ENCODE measurements at regions of chr5 and their contacts with region 1.

Region 1: GRCh38 chr5:172770675-172771438 is at the start of gene DUSP1:
- DNase-seq: peak; percentile 99
- ATAC-seq: peak; percentile 54
- H3K4me3 ChIP-seq: peak within 1 kb of the TSS; percentile 84 to 99 (median 99)
- H3K4me3 Mint-ChIP-seq: peak within 1 kb of the TSS; percentile 92
- H3K27ac ChIP-seq: peak within 1 kb of the TSS; percentile 100
- H3K27ac Mint-ChIP-seq: peak within 1 kb of the TSS; percentile 96
- H3K4me1 ChIP-seq: peaks cover 32 to 46% of the 10 kb centered on the region in 2 donors
- H3K4me1 Mint-ChIP-seq: peaks cover 70% of the 10 kb centered on the region
- H3K27me3 ChIP-seq: no peaks in the 10 kb centered on the region
- H3K27me3 Mint-ChIP-seq: no peaks in the 10 kb centered on the region
- CTCF ChIP-seq: peak; percentile 23
- total RNA-seq, gene DUSP1: 69.8 and 71.2 TPM in 2 replicates

Region 2: DNA sequence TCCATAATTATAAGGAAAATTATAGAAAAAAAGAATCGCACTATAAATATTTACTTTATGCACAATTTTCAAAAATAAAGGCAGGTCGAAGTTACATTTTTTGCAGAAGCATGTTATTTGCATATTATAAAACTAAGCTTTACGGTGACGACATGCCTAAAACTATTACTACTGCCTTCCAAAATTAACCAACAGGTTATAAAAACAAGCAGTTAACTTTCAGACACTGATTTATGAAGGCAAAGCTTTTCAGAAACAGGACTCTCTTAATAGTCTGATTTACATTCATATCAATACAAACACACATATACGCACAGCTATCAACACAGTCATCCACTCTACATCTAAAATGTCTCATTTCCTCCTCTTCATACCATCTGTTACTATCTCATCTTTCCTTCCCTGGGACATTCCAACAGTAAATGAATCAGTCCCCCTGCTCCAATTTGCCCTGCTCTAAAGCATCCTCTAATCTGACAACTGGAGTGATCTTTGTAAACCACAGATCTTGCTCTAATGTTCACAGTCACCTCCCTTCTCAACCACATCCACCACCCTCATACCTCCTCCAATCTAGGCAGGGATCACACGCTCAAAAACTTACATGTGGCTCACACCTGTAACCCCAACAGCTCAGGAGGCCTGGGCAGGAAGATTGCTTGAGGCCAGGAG is 786.0 kb before region 1 on chr5:
- CTCF ChIA-PET with region 1: no interaction called
- POLR2A ChIA-PET with region 1: no interaction called
- intact Hi-C with region 1: no loop called
- DNase-seq: no peak
- ATAC-seq: no peak
- H3K4me3 ChIP-seq: peak overlapping the region in 1 of 5 experiments; percentile 1
- H3K4me3 Mint-ChIP-seq: peak overlapping the region; percentile 44
- H3K27ac ChIP-seq: peak overlapping the region in 1 of 2 donors; percentile 51
- H3K27ac Mint-ChIP-seq: peak overlapping the region; percentile 64
- H3K4me1 ChIP-seq: peaks cover 52 to 64% of the 10 kb centered on the region in 2 donors
- H3K4me1 Mint-ChIP-seq: peaks cover 67% of the 10 kb centered on the region
- H3K27me3 ChIP-seq: no peaks in the 10 kb centered on the region
- H3K27me3 Mint-ChIP-seq: no peaks in the 10 kb centered on the region
- CTCF ChIP-seq: no peak

Region 3: DNA sequence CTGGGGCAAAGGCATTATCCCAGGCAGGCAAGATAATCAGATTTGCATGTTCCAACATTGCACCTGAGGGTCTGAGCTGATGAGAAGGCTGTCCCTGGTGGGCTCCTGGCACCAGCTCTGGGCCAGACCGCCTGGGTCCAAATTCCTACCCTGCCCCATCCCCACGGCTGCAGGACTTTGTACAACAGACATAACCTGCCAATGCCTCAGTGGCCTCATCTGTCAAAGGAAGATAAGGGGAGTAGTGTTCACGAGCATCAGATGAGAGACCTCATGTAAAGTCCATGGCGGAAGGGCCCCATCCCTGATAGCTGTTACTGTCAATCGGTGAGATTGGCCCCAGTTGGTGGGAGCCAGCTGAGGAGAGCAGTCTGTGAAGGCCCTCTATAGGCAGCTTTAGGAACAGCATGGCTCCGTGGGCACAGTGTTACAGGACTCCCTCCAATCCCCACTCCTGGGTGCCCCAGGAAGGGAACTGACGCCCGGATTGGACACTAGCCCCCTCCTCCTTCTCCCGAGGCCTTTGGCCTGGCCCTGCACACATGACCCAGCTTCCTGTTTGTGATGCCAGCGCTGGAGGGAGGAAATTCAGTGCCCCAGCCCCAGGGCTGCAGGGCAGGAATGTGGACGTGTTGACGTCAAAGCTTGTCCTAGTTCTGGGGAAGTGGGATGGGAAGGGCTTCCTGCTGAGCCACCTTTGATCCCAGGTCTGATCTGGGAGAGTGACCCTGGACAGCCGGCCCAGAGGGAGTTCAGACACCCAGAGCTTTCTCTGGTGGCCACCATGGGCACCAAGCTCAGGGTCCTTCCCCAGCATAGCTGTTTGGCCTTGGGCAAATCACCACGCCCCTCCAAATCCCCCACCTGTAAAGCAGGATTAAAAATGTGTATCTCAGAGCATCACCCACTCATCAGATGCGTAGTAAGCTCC is 56.1 kb before region 1 on chr5:
- CTCF ChIA-PET with region 1: interaction called, 68 read pairs
- POLR2A ChIA-PET with region 1: interaction called, 4 read pairs
- intact Hi-C with region 1: loop called (anchors 1 kb)
- DNase-seq: peak; percentile 80
- ATAC-seq: peak; percentile 77
- H3K4me3 ChIP-seq: no peak overlapping the region
- H3K4me3 Mint-ChIP-seq: no peak overlapping the region
- H3K27ac ChIP-seq: no peak overlapping the region
- H3K27ac Mint-ChIP-seq: no peak overlapping the region
- H3K4me1 ChIP-seq: peaks cover 7% of the 10 kb centered on the region in 2 donors
- H3K4me1 Mint-ChIP-seq: peaks cover 10% of the 10 kb centered on the region
- H3K27me3 ChIP-seq: peaks cover 0 to 4% (median 0%) of the 10 kb centered on the region in 4 experiments
- H3K27me3 Mint-ChIP-seq: peaks cover 19% of the 10 kb centered on the region
- CTCF ChIP-seq: peak; percentile 89

Region 4: DNA sequence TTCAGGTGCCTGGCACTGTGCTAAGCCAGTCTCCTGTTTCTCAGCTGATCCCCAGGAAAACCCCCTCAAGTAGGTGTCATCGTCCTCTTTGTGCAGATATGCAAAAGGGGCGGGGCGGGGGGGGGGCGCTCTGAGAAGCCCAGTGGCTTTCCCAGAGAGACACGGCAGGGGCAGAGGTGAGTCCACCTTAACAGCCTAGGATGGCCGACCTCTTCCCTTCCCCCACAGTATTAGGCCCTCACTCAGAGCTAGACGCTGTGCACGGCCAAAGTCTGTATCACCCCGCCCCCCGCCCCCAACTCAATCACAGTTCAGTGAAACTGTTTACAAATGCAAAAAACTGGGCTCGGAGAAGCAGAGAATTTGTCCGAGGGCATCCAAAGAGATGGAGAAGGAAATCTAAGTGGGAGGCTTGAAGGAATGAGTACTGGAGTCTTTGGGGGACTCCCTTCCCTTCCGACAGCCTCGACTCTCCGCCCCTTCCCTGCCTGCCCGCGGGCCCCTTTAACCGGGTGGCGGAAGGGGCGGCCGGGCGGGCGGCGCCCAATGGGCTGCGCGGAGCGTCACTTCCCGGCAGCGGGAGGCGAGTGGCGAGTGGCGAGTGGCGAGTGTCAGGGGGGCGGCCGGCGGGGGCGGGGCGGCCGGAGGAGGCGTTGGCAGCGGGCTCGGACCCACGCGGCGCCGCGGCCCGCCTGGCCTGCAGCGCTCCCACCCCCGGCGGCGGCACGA is 63.0 kb after region 1 on chr5 and contains the start of gene ERGIC1:
- CTCF ChIA-PET with region 1: interaction called, 60 read pairs
- POLR2A ChIA-PET with region 1: interaction called, 52 read pairs
- intact Hi-C with region 1: loop called (anchors 1 kb)
- DNase-seq: peak; percentile 86
- ATAC-seq: peak; percentile 74
- H3K4me3 ChIP-seq: peak within 1 kb of the TSS; percentile 62 to 90 (median 69)
- H3K4me3 Mint-ChIP-seq: peak within 1 kb of the TSS; percentile 90
- H3K27ac ChIP-seq: peak within 1 kb of the TSS; percentile 95 to 98
- H3K27ac Mint-ChIP-seq: peak within 1 kb of the TSS; percentile 96
- H3K4me1 ChIP-seq: peaks cover 42 to 52% of the 10 kb centered on the region in 2 donors
- H3K4me1 Mint-ChIP-seq: peaks cover 48% of the 10 kb centered on the region
- H3K27me3 ChIP-seq: no peaks in the 10 kb centered on the region
- H3K27me3 Mint-ChIP-seq: no peaks in the 10 kb centered on the region
- CTCF ChIP-seq: no peak
- total RNA-seq, gene ERGIC1: 132 and 140 TPM in 2 replicates

Region 5: GRCh38 chr5:172881691-172882370 is 111.0 kb after region 1 on chr5:
- CTCF ChIA-PET with region 1: interaction called, 11 read pairs
- POLR2A ChIA-PET with region 1: interaction called, 5 read pairs
- intact Hi-C with region 1: no loop called
- DNase-seq: peak; percentile 31
- ATAC-seq: peak; percentile 31
- H3K4me3 ChIP-seq: no peak overlapping the region
- H3K4me3 Mint-ChIP-seq: no peak overlapping the region
- H3K27ac ChIP-seq: peak overlapping the region in 1 of 2 donors; percentile 65
- H3K27ac Mint-ChIP-seq: peak overlapping the region; percentile 78
- H3K4me1 ChIP-seq: peaks cover 5 to 7% of the 10 kb centered on the region in 2 donors
- H3K4me1 Mint-ChIP-seq: peaks cover 31% of the 10 kb centered on the region
- H3K27me3 ChIP-seq: no peaks in the 10 kb centered on the region
- H3K27me3 Mint-ChIP-seq: no peaks in the 10 kb centered on the region
- CTCF ChIP-seq: no peak

Region 6: DNA sequence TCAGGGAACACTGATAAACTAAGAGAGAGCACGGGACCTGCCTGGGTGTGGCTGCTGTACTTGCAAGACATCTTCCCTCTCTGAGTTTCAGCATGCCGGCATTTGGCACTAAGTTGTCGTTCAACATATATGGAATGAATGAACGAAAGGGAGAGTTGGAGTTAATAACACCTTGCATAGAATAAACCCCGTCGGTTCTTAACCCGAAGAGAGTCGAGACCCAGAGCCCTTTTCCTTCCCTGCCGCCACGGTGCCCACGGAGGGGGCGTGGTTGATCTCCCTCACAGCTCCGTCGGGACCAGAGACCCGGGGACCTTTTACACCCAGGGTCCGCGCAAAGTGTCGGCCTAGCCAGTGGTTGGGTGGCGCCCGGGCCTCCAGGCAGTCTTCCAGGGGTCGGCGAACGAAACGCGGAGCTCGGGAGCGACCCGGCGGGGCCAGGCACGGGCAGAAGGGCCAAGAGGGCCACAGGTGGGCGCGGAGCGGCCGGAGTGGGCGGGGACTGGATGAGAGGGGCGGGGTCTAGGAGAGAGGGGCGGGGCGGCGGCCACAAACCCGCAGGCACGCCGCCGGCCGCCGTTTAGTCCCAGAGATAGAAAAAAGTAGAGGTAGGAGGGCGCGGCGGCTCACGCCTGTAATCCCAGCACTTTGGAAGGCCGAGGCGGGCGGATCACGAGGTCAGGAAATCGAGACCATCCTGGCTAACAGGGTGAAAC is 187.6 kb after region 1 on chr5:
- CTCF ChIA-PET with region 1: interaction called, 3 read pairs
- POLR2A ChIA-PET with region 1: interaction called, 8 read pairs
- intact Hi-C with region 1: loop called (anchors 1 kb)
- DNase-seq: peak; percentile 82
- ATAC-seq: peak; percentile 73
- H3K4me3 ChIP-seq: peak overlapping the region; percentile 44 to 97 (median 85)
- H3K4me3 Mint-ChIP-seq: peak overlapping the region; percentile 97
- H3K27ac ChIP-seq: peak overlapping the region; percentile 54 to 81
- H3K27ac Mint-ChIP-seq: peak overlapping the region; percentile 96
- H3K4me1 ChIP-seq: peaks cover 8 to 18% of the 10 kb centered on the region in 2 donors
- H3K4me1 Mint-ChIP-seq: peaks cover 23% of the 10 kb centered on the region
- H3K27me3 ChIP-seq: no peaks in the 10 kb centered on the region
- H3K27me3 Mint-ChIP-seq: no peaks in the 10 kb centered on the region
- CTCF ChIP-seq: no peak